ENCODE measurements at regions of chr10 and their contacts with region 1.

Region 1: GRCh38 chr10:14843327-14843988 is 5.4 kb downstream of the HSPA14 start:
- DNase-seq: no peak
- H3K4me3 ChIP-seq: no peak overlapping the region
- H3K27ac ChIP-seq: no peak overlapping the region
- H3K4me1 ChIP-seq: peaks cover 2 to 9% (median 6%) of the 10 kb centered on the region in 4 experiments
- H3K27me3 ChIP-seq: no peaks in the 10 kb centered on the region

Region 2: DNA sequence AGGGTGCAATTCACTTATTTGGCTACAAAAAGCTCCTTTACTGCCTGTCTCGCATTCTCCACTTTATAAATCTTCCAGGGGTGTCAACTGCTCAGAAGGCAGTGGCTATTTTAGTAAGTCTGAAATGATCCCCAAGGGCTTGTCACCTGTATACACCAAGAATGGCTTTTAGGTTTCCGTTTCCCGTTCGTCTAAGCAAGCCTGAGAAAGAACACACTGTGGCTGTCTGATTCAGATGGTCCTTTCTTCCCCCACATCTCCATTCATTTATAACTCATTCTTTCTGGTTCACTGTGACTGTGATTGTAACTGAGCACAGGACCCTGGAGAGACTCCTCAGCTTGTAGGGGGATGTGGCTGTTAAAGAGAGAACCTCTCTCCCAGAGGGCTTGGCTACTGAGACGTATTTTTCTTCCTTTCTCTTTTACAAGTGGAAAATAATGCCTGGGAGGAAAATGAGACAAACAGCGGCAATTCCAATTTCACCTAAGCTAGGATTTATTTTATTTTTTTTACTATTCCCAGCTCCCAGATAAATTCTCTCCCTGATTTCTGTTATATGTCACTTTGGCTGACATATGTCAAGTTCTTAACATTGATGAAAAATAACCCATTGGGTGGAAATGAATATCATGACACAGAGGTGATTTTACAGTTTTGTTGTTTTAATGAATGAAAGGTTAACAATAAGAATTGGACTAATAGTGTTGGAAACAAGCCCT is 198.1 kb before region 1 on chr10:
- CTCF ChIA-PET with region 1: no interaction called
- POLR2A ChIA-PET with region 1: no interaction called
- DNase-seq: no peak
- H3K4me3 ChIP-seq: no peak overlapping the region
- H3K27ac ChIP-seq: no peak overlapping the region
- H3K4me1 ChIP-seq: peaks cover 7 to 18% (median 15%) of the 10 kb centered on the region in 4 experiments
- H3K27me3 ChIP-seq: no peaks in the 10 kb centered on the region

Region 3: GRCh38 chr10:14859775-14860174 is 16.3 kb after region 1 on chr10:
- CTCF ChIA-PET with region 1: interaction called, 13 read pairs
- POLR2A ChIA-PET with region 1: no interaction called
- DNase-seq: no peak
- H3K4me3 ChIP-seq: no peak overlapping the region
- H3K27ac ChIP-seq: no peak overlapping the region
- H3K4me1 ChIP-seq: no peaks in the 10 kb centered on the region
- H3K27me3 ChIP-seq: no peaks in the 10 kb centered on the region